ENCODE measurements at regions of chr10 and their contacts with region 1.

Region 1: GRCh38 chr10:75111367-75111906 is at the start of gene SAMD8:
- DNase-seq: peak; percentile 97 to 99
- ATAC-seq: peak; percentile 49 to 50
- H3K4me3 ChIP-seq: peak within 1 kb of the TSS; percentile 88 to 100 (median 94)
- H3K27ac ChIP-seq: peak within 1 kb of the TSS; percentile 97 to 100 (median 98)
- H3K4me1 ChIP-seq: peaks cover 67 to 72% of the 10 kb centered on the region in 2 donors
- H3K27me3 ChIP-seq: no peaks in the 10 kb centered on the region
- CTCF ChIP-seq: peak; percentile 17 to 78 (median 54)
- POLR2A ChIP-seq: peak; percentile 99
- total RNA-seq, gene SAMD8: 46.2 to 125 (median 68.9) TPM

Region 2: GRCh38 chr10:73879296-73880173 is 1231.9 kb before region 1 on chr10:
- in situ Hi-C with region 1: no loop called
- intact Hi-C with region 1: loop called (anchors 10 kb)
- DNase-seq: peak; percentile 69 to 84
- ATAC-seq: peak; percentile 76 to 77
- H3K4me3 ChIP-seq: no peak overlapping the region
- H3K27ac ChIP-seq: peak overlapping the region in 3 of 4 donors; percentile 45 to 55 (median 47)
- H3K4me1 ChIP-seq: peaks cover 16 to 23% of the 10 kb centered on the region in 2 donors
- H3K27me3 ChIP-seq: no peaks in the 10 kb centered on the region
- CTCF ChIP-seq: peak; percentile 88 to 98 (median 97)
- POLR2A ChIP-seq: no peak

Region 3: GRCh38 chr10:74826142-74827044 is 285.0 kb before region 1 on chr10 and contains the start of gene KAT6B:
- in situ Hi-C with region 1: no loop called
- intact Hi-C with region 1: loop called (anchors 1 kb)
- DNase-seq: peak; percentile 100
- ATAC-seq: peak; percentile 81 to 83
- H3K4me3 ChIP-seq: peak within 1 kb of the TSS; percentile 92 to 97 (median 96)
- H3K27ac ChIP-seq: peak within 1 kb of the TSS; percentile 94 to 100 (median 98)
- H3K4me1 ChIP-seq: peaks cover 43 to 50% of the 10 kb centered on the region in 2 donors
- H3K27me3 ChIP-seq: no peaks in the 10 kb centered on the region
- CTCF ChIP-seq: peak in 1 of 5 experiments; percentile 9
- POLR2A ChIP-seq: peak; percentile 22 to 77
- total RNA-seq, gene KAT6B: 12.0 to 37.7 (median 21.6) TPM

Region 4: GRCh38 chr10:74888962-74889663 is 222.3 kb before region 1 on chr10:
- in situ Hi-C with region 1: no loop called
- intact Hi-C with region 1: loop called (anchors 2 kb)
- DNase-seq: peak in 1 of 2 donors; percentile 25
- ATAC-seq: peak; percentile 53 to 68
- H3K4me3 ChIP-seq: no peak overlapping the region
- H3K27ac ChIP-seq: peak overlapping the region; percentile 21 to 72 (median 52)
- H3K4me1 ChIP-seq: peaks cover 41 to 63% of the 10 kb centered on the region in 2 donors
- H3K27me3 ChIP-seq: no peaks in the 10 kb centered on the region
- CTCF ChIP-seq: peak in 2 of 5 experiments; percentile 20 to 21
- POLR2A ChIP-seq: no peak

Region 5: GRCh38 chr10:75097666-75098285 is 13.7 kb before region 1 on chr10:
- in situ Hi-C with region 1: no loop called
- intact Hi-C with region 1: no loop called
- DNase-seq: peak in 1 of 2 donors; percentile 9
- ATAC-seq: no peak
- H3K4me3 ChIP-seq: no peak overlapping the region
- H3K27ac ChIP-seq: peak overlapping the region in 1 of 4 donors; percentile 39
- H3K4me1 ChIP-seq: peaks cover 35 to 36% of the 10 kb centered on the region in 2 donors
- H3K27me3 ChIP-seq: no peaks in the 10 kb centered on the region
- CTCF ChIP-seq: no peak
- POLR2A ChIP-seq: no peak

Region 6: GRCh38 chr10:75210282-75211006 is 99.0 kb after region 1 on chr10 and contains the start of gene VDAC2:
- in situ Hi-C with region 1: no loop called
- intact Hi-C with region 1: loop called (anchors 1 kb)
- DNase-seq: peak; percentile 84 to 92
- ATAC-seq: peak; percentile 85
- H3K4me3 ChIP-seq: peak within 1 kb of the TSS; percentile 83 to 98 (median 93)
- H3K27ac ChIP-seq: peak within 1 kb of the TSS; percentile 98 to 100 (median 99)
- H3K4me1 ChIP-seq: peaks cover 34 to 55% of the 10 kb centered on the region in 2 donors
- H3K27me3 ChIP-seq: no peaks in the 10 kb centered on the region
- CTCF ChIP-seq: peak in 2 of 5 experiments; percentile 27 to 43
- POLR2A ChIP-seq: peak; percentile 95
- total RNA-seq, gene VDAC2: 255 to 442 (median 268) TPM

Region 7: DNA sequence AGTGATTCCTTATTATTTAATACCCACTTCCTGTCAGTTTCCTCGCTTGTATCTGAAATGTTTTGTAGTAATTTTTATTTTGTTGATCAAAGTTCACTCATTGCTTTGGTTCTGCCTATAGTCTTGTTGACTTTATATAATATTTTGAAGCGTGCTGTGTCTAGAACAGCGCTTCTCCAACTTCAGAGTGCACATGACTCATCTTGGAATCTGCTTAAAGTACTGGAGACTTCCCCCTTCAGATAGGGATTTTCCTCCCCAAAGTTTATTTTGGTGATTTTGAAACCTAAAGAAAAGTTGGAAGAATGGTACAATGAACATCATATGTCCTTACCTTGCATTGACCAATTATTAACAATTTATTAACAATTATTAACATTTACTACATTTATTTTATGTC is 118.5 kb after region 1 on chr10:
- in situ Hi-C with region 1: loop called in 3 of 4 experiments (anchors 5 to 10 kb)
- intact Hi-C with region 1: loop called (anchors 1 kb)
- DNase-seq: no peak
- ATAC-seq: no peak
- H3K4me3 ChIP-seq: no peak overlapping the region
- H3K27ac ChIP-seq: peak overlapping the region; percentile 72 to 95 (median 76)
- H3K4me1 ChIP-seq: peaks cover 53 to 56% of the 10 kb centered on the region in 2 donors
- H3K27me3 ChIP-seq: no peaks in the 10 kb centered on the region
- CTCF ChIP-seq: no peak
- POLR2A ChIP-seq: no peak

Region 8: DNA sequence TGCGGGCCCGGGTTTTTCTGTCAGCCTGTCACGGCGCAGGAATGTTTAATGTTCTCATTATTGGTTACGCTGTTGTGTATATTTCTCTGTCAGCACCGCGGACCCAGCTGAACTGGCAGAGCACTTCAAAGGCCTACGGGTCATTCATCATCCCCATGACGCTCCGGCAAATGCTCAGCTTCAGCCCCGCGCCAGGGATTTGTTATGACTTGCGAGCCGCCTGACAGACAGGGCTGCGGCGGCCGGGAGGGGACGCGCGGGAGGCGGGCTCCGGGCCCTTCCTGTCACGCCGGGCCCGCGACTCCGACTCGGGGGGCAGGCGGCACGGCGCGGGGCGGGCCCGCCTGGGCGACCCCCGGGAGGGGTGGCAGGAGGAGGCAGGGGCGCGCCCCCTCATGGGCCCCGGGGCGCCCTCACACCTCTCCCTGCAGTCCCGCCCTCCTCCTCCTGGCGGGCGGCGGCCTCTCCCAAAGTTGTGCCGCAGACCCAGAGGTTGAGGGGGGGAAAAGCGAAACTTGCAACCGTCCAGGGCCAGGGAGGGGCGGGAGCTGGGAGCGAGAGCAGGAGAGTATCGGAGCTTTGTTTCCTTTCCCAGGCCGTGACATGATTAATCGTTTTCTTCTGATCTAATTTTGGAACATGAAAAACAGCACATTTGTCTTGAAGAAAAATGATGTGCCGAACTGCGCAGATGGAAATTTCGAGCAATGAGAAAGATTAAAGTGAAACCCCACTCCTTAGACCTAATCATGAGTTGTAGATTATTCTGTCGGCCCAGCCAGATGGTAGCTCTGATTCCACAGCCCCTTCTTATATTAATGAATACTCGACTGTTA is 183.6 kb after region 1 on chr10:
- in situ Hi-C with region 1: no loop called
- intact Hi-C with region 1: loop called (anchors 10 kb)
- DNase-seq: peak; percentile 69 to 80
- ATAC-seq: peak; percentile 76 to 77
- H3K4me3 ChIP-seq: peak overlapping the region; percentile 58 to 76 (median 64)
- H3K27ac ChIP-seq: peak overlapping the region; percentile 87 to 92 (median 90)
- H3K4me1 ChIP-seq: peaks cover 21 to 22% of the 10 kb centered on the region in 2 donors
- H3K27me3 ChIP-seq: no peaks in the 10 kb centered on the region
- CTCF ChIP-seq: peak; percentile 29 to 60 (median 40)
- POLR2A ChIP-seq: peak; percentile 77 to 85

Measured in gastrocnemius medialis (tissue), 4 donors.